PC-9 (cell line): ENCODE measurements at regions of chr3 and their contacts with region 1.

Region 1: GRCh38 chr3:101685870-101686412 is 577 bp downstream of the RPL24 start:
- DNase-seq: no peak
- H3K4me3 ChIP-seq: peak overlapping the region; percentile 78
- H3K27ac ChIP-seq: peak overlapping the region; percentile 89
- H3K4me1 ChIP-seq: peaks cover 42% of the 10 kb centered on the region
- H3K27me3 ChIP-seq: no peaks in the 10 kb centered on the region
- CTCF ChIP-seq: no peak

Region 2: GRCh38 chr3:101036213-101036618 is 649.7 kb before region 1 on chr3:
- CTCF ChIA-PET with region 1: no interaction called
- POLR2A ChIA-PET with region 1: no interaction called
- intact Hi-C with region 1: loop called (anchors 10 kb)
- DNase-seq: peak; percentile 91 to 99
- H3K4me3 ChIP-seq: peak overlapping the region; percentile 14; the same call in 1 of the 2 replicates
- H3K27ac ChIP-seq: peak overlapping the region; percentile 92
- H3K4me1 ChIP-seq: peaks cover 35% of the 10 kb centered on the region
- H3K27me3 ChIP-seq: no peaks in the 10 kb centered on the region
- CTCF ChIP-seq: no peak

Region 3: DNA sequence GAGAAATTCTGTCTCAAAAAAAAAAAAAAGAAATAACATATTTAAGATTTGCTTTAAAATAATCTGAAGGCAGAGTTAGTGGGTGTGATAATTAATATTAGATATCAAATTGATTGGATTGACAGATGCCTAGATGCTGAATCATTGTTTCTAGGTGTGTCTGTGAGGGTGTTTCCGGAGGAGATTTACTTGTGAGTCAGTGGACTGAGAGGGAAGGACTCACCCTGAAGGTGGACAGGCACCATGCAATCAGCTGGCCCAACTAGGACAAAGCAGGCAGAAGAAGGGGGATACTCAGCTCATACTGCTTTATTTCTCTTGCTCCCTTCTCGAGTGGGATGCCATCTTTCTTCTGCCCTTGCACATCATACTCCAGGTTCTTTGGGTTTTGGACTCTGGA is 17.2 kb after region 1 on chr3:
- CTCF ChIA-PET with region 1: interaction called, 5 read pairs
- POLR2A ChIA-PET with region 1: interaction called, 4 read pairs
- intact Hi-C with region 1: loop called (anchors 2 kb)
- DNase-seq: peak; percentile 67 to 86
- H3K4me3 ChIP-seq: no peak overlapping the region
- H3K27ac ChIP-seq: peak overlapping the region; percentile 57
- H3K4me1 ChIP-seq: peaks cover 22% of the 10 kb centered on the region
- H3K27me3 ChIP-seq: no peaks in the 10 kb centered on the region
- CTCF ChIP-seq: no peak

Region 4: DNA sequence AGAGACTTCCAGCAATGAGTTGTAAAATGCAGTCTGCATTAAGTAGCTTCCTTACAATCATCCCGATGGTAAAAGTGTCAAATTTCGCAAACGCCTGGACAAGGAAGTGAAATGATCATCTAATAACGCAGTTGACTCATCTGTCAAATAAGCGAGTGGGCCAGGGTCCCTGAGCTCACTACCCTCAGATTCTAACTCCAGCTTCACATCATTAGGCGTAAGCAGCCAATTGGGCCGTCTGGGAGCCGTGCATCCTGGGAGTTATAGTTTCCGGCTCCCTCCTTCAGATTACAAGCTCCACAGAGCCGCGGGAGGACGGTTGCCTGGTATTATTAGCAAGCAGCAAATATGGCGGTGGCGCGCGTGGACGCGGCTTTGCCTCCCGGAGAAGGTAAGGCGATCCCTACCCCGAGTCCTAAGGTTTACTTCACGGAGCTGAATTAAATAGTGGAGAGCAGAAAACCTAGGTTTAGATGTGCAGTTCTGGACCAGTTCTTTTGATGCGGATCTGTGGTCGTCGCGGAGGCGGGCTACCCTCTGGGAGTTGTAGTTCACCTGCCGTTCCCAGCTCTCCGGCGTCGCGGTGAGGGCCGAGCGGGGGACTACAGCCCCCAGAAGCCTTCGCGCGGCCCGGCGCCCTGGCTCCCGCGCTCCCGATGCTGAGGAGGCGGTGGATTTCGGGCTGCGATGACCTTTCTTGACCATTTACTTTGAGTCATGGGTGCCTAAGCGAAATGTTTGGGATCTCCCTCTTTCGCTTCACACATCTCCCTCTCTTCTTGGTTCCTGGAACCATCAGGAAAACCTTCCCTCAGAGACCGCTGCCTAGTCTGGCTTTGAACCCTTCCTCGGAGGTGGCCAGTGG is 38.6 kb after region 1 on chr3 and contains the start of gene CEP97:
- CTCF ChIA-PET with region 1: no interaction called
- POLR2A ChIA-PET with region 1: no interaction called
- intact Hi-C with region 1: loop called (anchors 2 kb)
- DNase-seq: peak; percentile 93 to 96
- H3K4me3 ChIP-seq: peak within 1 kb of the TSS; percentile 90
- H3K27ac ChIP-seq: peak within 1 kb of the TSS; percentile 31
- H3K4me1 ChIP-seq: peaks cover 10% of the 10 kb centered on the region
- H3K27me3 ChIP-seq: no peaks in the 10 kb centered on the region
- CTCF ChIP-seq: no peak
- total RNA-seq, gene CEP97: 13.4 and 20.6 TPM in 2 replicates

Region 5: GRCh38 chr3:102483556-102483955 is 797.6 kb after region 1 on chr3:
- CTCF ChIA-PET with region 1: interaction called, 10 read pairs
- POLR2A ChIA-PET with region 1: no interaction called
- intact Hi-C with region 1: no loop called
- DNase-seq: no peak
- H3K4me3 ChIP-seq: no peak overlapping the region
- H3K27ac ChIP-seq: no peak overlapping the region
- H3K4me1 ChIP-seq: peaks cover 6% of the 10 kb centered on the region; the same call in 1 of the 2 replicates
- H3K27me3 ChIP-seq: no peaks in the 10 kb centered on the region
- CTCF ChIP-seq: no peak